ENCODE measurements at regions of chr17 and their contacts with region 1.

Region 1: GRCh38 chr17:79082311-79083190 is 7.9 kb downstream of the ENGASE start:
- H3K4me3 ChIP-seq: no peak overlapping the region
- H3K27ac ChIP-seq: no peak overlapping the region
- H3K4me1 ChIP-seq: no peaks in the 10 kb centered on the region
- CTCF ChIP-seq: peak; percentile 80

Region 2: DNA sequence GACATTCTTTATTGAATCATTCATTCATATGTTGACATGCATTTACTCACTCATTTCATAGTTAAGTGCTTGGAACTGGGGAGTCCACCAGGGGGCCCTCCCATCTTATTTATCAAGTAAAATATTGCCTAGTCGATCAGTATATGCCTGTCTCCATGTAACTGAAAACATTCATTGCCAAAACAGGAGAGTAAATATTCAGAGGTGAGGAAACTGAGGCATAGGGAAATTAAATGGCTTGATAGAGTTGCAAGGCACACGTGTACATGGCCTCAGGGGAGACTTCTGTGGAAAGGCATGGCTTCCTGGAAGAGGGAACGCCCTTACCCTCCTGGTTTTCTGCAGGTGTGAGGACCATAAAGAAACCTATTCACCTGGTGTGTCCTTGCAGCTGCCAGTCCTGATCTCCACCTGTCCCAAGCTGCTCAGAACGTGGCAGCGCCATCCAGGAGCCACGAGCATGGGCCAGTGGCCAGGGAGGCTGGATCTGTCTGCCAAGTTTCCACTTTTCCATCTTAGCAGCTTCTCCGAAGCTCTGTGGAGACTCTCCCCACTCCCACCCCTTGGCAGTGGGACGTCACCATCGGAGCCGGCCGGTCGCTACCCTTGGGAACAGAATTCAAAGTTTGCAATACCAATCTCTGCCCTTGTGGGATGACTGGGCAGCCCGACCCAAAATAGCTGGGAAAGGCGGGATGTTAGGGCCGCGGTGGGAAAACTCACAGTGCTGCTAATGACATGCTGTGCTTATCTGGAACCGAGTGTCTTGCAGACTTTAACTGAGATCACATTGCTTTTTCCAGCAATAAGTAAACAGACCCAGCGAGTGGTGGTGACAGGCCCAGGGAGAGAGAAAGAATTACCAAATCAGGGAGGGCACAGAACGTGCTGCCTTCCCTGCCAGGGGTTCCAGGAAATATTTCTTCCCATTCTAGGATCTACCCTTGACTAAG is 62.6 kb before region 1 on chr17:
- CTCF ChIA-PET with region 1: interaction called, 26 read pairs
- POLR2A ChIA-PET with region 1: no interaction called
- H3K4me3 ChIP-seq: no peak overlapping the region
- H3K27ac ChIP-seq: peak overlapping the region; percentile 14; the same call in 1 of the 2 replicates
- H3K4me1 ChIP-seq: peaks cover 21% of the 10 kb centered on the region
- CTCF ChIP-seq: no peak

Region 3: DNA sequence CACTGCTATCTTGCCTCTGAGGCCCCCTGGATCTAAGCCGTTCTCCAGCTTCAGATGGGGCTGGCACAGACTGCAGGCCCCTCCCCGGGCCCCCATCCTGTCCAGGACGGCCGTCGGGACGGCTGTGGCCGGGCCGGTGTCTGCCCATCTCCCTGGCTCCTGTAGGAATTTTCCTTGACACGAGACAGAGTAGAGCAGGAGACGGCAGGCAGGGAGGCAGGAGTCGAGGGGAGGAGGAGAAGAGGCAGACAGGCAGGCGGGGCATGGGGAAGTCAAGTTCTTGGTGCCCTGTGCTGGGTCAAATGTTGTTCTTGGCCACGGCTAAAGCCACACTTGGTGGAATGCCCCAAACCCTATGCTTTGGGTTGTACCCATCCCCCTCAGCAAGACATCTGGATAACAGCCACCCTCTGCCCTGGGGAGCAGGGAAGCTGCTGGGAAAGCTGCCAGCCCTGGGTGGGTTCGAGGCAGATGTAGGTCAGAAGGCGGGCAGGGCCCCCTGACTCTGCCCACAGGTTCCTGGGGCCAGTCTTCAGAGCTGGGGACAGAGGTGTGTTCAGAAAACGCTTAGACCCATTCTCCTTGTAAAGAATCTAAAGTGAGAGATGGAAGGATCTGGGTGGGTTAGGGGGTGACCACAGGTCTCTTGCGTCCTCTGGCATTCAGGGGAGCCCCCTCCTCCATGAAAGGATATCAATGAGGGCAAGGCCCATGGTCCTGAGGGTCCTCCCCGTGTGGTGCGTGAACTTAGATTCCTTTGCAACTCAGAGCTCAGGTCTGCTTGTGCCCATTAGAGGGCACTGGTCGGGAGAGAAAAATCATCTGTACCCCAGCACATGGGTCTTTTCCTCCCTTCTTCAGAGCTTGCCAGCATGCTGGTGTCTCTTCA is 54.4 kb before region 1 on chr17:
- CTCF ChIA-PET with region 1: interaction called, 10 read pairs
- POLR2A ChIA-PET with region 1: no interaction called
- H3K4me3 ChIP-seq: no peak overlapping the region
- H3K27ac ChIP-seq: no peak overlapping the region
- H3K4me1 ChIP-seq: peaks cover 26% of the 10 kb centered on the region
- CTCF ChIP-seq: peak; percentile 48

Region 4: DNA sequence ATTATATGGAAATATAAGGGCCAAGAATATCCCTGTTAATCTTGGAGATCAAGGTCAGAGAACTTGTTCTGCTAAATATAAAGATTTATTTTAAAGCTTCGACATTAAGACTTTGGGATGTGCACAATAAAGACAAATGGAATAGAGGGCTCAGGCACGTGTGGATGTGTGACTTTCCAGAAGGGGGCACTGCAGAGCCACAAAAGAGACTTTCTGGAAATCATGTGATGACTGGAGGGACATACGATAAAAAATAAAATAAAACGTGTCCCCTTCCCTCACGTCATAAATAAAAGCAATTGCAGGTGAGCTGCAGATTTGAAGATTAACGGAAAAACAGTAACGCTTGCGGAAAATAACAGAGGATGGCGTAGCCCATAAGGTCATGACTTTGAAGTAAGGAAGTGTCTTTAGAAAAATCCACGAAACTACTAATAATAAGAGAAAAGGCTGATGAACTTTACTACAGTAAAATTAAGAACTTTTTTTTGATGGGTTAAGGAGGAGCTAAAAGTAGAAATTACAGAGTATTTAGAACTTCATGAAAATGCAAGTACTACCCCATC is 17.4 kb before region 1 on chr17:
- CTCF ChIA-PET with region 1: interaction called, 34 read pairs
- POLR2A ChIA-PET with region 1: no interaction called
- H3K4me3 ChIP-seq: no peak overlapping the region
- H3K27ac ChIP-seq: no peak overlapping the region
- H3K4me1 ChIP-seq: no peaks in the 10 kb centered on the region
- CTCF ChIP-seq: no peak

Region 5: GRCh38 chr17:79095345-79096055 is 12.9 kb after region 1 on chr17:
- CTCF ChIA-PET with region 1: interaction called, 14 read pairs
- POLR2A ChIA-PET with region 1: interaction called, 4 read pairs
- H3K4me3 ChIP-seq: no peak overlapping the region
- H3K27ac ChIP-seq: no peak overlapping the region
- H3K4me1 ChIP-seq: no peaks in the 10 kb centered on the region
- CTCF ChIP-seq: no peak

Measured in HEK293 (cell line).